ENCODE measurements at regions of chr7 and their contacts with region 1.

Region 1: GRCh38 chr7:141072548-141073172 is 1.2 kb upstream of the TMEM178B start:
- DNase-seq: peak; percentile 54
- H3K4me3 Mint-ChIP-seq: peak overlapping the region; percentile 68
- H3K27ac Mint-ChIP-seq: no peak overlapping the region
- H3K4me1 Mint-ChIP-seq: peaks cover 12% of the 10 kb centered on the region
- H3K27me3 Mint-ChIP-seq: peaks cover 44% of the 10 kb centered on the region

Region 2: DNA sequence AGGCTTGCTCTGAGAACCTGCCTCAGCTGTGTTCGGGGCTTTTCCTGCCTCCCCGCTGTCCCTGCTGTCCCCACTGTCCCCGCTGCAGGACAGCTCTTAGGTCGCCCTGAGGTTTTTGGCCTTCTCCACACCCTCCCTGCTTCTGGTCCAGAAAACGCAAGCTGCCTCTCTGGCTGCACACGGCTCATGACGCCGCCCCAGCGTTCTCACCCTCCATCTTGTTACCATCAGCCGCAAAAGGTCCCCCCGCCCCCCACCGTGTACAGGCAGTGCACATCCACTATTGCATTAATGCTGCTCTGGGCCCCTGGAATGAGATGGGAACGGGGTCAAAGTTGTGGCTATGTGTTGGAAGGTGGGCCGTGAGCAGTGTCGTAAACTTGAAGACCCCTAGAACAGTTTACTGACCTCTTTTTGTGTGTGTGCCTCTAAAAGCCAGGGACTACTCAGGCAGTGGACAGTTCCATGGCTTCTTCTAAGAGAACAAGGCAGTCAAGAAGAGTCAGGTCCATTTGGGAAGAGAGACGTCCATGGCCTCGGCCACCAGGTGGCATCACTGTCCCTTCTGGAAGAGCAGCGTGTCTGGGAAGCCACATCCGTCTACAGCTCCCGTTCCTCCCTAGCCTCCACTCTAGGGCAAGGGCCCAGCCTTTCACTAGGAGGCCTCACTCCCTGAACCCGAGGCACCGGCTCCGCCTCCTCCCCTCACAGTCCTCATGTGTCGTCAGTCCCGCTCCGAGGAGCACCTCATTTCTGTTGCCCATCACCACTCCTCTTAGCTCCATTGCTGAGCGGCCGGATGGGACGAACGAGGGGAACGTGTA is 554.9 kb before region 1 on chr7:
- CTCF ChIA-PET with region 1: no interaction called
- POLR2A ChIA-PET with region 1: no interaction called
- intact Hi-C with region 1: no loop called
- DNase-seq: peak; percentile 83
- H3K4me3 Mint-ChIP-seq: no peak overlapping the region
- H3K27ac Mint-ChIP-seq: no peak overlapping the region
- H3K4me1 Mint-ChIP-seq: no peaks in the 10 kb centered on the region
- H3K27me3 Mint-ChIP-seq: peaks cover 7% of the 10 kb centered on the region

Region 3: GRCh38 chr7:141053626-141054025 is 19.0 kb before region 1 on chr7:
- CTCF ChIA-PET with region 1: interaction called, 4 read pairs
- POLR2A ChIA-PET with region 1: no interaction called
- intact Hi-C with region 1: loop called (anchors 1 kb)
- DNase-seq: peak; percentile 84
- H3K4me3 Mint-ChIP-seq: no peak overlapping the region
- H3K27ac Mint-ChIP-seq: peak overlapping the region; percentile 57
- H3K4me1 Mint-ChIP-seq: peaks cover 22% of the 10 kb centered on the region
- H3K27me3 Mint-ChIP-seq: no peaks in the 10 kb centered on the region

Region 4: DNA sequence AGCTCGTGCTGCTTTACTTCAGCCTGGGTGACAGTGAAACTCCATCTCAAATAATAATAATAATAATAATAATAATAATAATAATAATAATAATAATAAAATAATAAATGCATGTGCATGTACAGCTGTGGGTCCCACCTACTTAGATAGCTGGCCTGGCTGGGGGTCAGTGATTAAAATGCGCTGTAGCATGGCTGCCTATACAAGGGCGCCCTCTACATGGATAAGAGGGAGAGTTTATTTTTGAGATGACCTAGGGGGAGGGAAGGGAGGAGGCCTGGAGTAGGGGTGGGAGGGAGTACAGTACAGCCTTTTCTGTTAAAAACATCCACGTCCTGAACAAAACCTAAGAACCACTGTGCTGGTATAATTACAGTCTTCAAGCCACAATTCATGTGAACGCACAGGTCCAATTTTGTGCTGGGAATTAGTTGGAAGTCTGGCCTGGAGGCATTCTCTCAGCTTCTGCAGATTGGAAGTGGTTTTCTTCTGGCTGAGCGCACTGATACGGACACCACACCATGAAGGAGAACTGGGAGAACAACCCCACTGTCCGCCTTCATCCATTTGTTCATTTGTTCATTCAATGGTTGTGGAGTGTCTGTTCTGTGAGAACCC is 147.7 kb after region 1 on chr7:
- CTCF ChIA-PET with region 1: interaction called, 3 read pairs
- POLR2A ChIA-PET with region 1: no interaction called
- intact Hi-C with region 1: loop called (anchors 5 kb)
- DNase-seq: no peak
- H3K4me3 Mint-ChIP-seq: no peak overlapping the region
- H3K27ac Mint-ChIP-seq: no peak overlapping the region
- H3K4me1 Mint-ChIP-seq: no peaks in the 10 kb centered on the region
- H3K27me3 Mint-ChIP-seq: no peaks in the 10 kb centered on the region

Region 5: GRCh38 chr7:141558544-141559183 is 486.0 kb after region 1 on chr7:
- CTCF ChIA-PET with region 1: no interaction called
- POLR2A ChIA-PET with region 1: no interaction called
- intact Hi-C with region 1: loop called (anchors 5 kb)
- DNase-seq: peak; percentile 17
- H3K4me3 Mint-ChIP-seq: no peak overlapping the region
- H3K27ac Mint-ChIP-seq: peak overlapping the region; percentile 79
- H3K4me1 Mint-ChIP-seq: peaks cover 64% of the 10 kb centered on the region
- H3K27me3 Mint-ChIP-seq: no peaks in the 10 kb centered on the region

Measured in activated CD4-positive, alpha-beta memory T cell treated with anti-CD3 and anti-CD28 coated beads for 36 hours (primary cell).